Ascending aorta (tissue), 2 donors: ENCODE measurements at regions of chr10 and their contacts with region 1.

Region 1: DNA sequence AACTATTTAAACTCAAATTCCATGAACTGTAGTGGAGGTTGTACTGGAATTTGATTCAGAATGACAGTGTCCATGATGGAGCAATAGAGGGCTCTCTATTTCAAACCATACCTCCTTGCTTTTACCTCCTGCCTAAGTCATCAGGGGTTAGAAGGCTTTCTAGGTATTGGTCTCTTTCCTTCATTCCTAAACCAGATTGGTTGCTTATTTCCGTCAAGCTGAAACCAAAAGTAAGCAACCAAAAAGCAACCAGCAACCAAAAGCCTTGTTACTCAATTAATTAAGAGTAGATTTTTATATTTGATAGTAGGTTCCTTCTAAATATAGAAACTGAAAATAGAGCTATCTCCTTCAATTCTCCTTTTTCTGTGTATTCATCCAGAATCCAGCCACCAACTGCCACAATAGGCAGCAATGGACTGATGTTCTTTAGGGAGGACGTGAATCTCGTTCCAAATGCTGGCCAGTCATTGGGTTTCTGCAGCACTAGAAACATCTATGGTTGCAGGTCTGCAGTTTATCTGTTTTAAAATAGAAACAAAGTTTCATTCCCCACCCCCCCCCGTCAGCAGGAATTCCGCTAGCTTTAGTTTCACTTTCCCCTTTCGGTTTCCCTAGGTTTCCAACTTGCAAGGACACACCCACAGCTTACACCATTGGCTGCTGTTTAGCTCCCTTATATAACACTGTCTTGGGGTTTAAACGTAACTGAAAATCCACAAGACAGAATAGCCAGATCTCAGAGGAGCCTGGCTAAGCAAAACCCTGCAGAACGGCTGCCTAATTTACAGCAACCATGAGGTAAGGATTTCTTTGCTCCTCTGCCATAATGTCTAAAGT is at the start of gene IFIT1:
- DNase-seq: peak in 1 of 2 donors; percentile 81
- H3K4me3 ChIP-seq: peak within 1 kb of the TSS; percentile 71 to 73
- H3K27ac ChIP-seq: peak within 1 kb of the TSS; percentile 73 to 76
- H3K4me1 ChIP-seq: peaks cover 3 to 28% of the 10 kb centered on the region in 2 donors
- H3K27me3 ChIP-seq: no peaks in the 10 kb centered on the region
- CTCF ChIP-seq: no peak
- total RNA-seq, gene IFIT1: 28.5 TPM

Region 2: GRCh38 chr10:89369156-89370105 is 22.7 kb before region 1 on chr10:
- intact Hi-C with region 1: loop called (anchors 2 kb)
- DNase-seq: no peak
- H3K4me3 ChIP-seq: no peak overlapping the region
- H3K27ac ChIP-seq: no peak overlapping the region
- H3K4me1 ChIP-seq: peaks cover 9 to 27% of the 10 kb centered on the region in 2 donors
- H3K27me3 ChIP-seq: no peaks in the 10 kb centered on the region
- CTCF ChIP-seq: peak; percentile 37 to 61 (median 41)

Region 3: GRCh38 chr10:89414146-89414878 is 22.2 kb after region 1 on chr10 and contains the start of gene IFIT5:
- intact Hi-C with region 1: loop called (anchors 2 kb)
- DNase-seq: peak in 1 of 2 donors; percentile 85
- H3K4me3 ChIP-seq: peak within 1 kb of the TSS; percentile 84 to 98
- H3K27ac ChIP-seq: peak within 1 kb of the TSS; percentile 95 to 98
- H3K4me1 ChIP-seq: peaks cover 5 to 16% of the 10 kb centered on the region in 2 donors
- H3K27me3 ChIP-seq: no peaks in the 10 kb centered on the region
- CTCF ChIP-seq: no peak
- total RNA-seq, gene IFIT5: 3.3 TPM